ENCODE measurements at regions of chr4 and their contacts with region 1.

Region 1: GRCh38 chr4:70901984-70902576 is at the start of gene MOB1B:
- DNase-seq: peak; percentile 87 to 93
- ATAC-seq: peak; percentile 96 to 98 (median 97)
- H3K4me3 ChIP-seq: peak within 1 kb of the TSS; percentile 74 to 99 (median 91)
- H3K27ac ChIP-seq: peak within 1 kb of the TSS; percentile 77 to 93 (median 89)
- H3K4me1 ChIP-seq: peaks cover 0 to 21% (median 10%) of the 10 kb centered on the region in 9 donors
- H3K27me3 ChIP-seq: no peaks in the 10 kb centered on the region
- CTCF ChIP-seq: peak; percentile 15 to 63 (median 46)
- total RNA-seq, gene MOB1B: 15.6 to 33.4 (median 20.3) TPM

Region 2: DNA sequence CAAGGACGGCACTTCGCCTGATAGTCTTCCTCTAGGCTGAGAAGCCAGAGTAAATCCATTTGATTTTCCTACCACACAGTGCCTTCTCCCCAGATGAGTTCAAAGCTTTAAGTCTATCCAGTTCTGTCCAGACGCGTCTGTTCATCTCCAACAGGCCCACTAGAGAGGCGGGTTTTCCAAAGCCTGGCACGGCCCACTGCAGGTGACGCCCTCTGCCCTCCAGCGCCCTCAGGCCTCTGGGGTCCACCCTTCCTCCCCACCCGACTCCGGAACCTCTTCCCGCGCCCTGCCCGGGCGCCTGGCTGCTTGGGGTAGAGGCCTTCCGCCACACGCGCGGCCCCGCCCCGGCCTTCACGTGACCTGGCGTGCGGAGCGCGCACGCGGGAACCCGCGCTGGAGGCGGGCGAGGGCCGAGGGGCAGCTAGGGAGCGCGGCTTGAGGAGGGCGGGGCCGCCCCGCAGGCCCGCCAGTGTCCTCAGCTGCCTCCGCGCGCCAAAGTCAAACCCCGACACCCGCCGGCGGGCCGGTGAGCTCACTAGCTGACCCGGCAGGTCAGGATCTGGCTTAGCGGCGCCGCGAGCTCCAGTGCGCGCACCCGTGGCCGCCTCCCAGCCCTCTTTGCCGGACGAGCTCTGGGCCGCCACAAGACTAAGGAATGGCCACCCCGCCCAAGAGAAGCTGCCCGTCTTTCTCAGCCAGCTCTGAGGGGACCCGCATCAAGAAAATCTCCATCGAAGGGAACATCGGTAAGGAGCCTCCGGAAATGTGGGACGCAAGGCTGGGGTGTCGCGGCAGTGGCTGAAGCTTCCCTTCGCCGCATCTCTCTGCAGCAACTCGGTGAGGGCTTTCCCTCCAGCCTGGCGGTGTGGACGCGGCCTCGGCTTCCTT is 91.3 kb after region 1 on chr4 and contains the start of gene DCK:
- intact Hi-C with region 1: loop called in 4 of 10 experiments (anchors 5 to 10 kb)
- DNase-seq: peak; percentile 90 to 94
- ATAC-seq: peak; percentile 98 to 100 (median 99)
- H3K4me3 ChIP-seq: peak within 1 kb of the TSS; percentile 66 to 90 (median 80)
- H3K27ac ChIP-seq: peak within 1 kb of the TSS; percentile 49 to 93 (median 86)
- H3K4me1 ChIP-seq: peaks cover 0 to 54% (median 23%) of the 10 kb centered on the region in 9 donors
- H3K27me3 ChIP-seq: no peaks in the 10 kb centered on the region
- CTCF ChIP-seq: peak in 3 of 9 donors; percentile 7 to 18 (median 12)
- total RNA-seq, gene DCK: 4.7 to 9.3 (median 6.5) TPM

Region 3: DNA sequence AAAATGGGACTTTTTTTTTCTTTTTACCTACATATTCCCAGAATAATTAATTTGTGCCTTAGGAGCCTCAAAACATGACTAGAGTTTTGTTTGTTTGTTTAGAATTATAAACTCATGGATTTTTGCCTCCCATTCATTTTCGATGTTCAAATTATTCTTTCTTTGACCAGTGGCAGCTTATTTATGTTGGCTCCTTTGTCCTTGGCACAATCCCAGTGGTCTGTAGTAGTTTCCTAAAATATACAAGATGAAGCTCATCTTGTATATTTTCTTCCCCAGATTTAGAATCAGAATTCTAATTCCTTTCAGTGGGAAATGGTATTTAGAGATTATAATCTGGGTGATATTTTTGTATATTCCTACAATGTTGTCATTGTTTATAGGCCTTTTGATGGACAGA is 118.5 kb after region 1 on chr4:
- intact Hi-C with region 1: no loop called
- DNase-seq: no peak
- ATAC-seq: no peak
- H3K4me3 ChIP-seq: no peak overlapping the region
- H3K27ac ChIP-seq: no peak overlapping the region
- H3K4me1 ChIP-seq: peaks cover 0 to 12% (median 4%) of the 10 kb centered on the region in 9 donors
- H3K27me3 ChIP-seq: no peaks in the 10 kb centered on the region
- CTCF ChIP-seq: no peak

Measured in heart right ventricle (tissue), 16 donors.